CD14-positive monocyte (primary cell): ENCODE measurements at regions of chr5 and their contacts with region 1.

Region 1: DNA sequence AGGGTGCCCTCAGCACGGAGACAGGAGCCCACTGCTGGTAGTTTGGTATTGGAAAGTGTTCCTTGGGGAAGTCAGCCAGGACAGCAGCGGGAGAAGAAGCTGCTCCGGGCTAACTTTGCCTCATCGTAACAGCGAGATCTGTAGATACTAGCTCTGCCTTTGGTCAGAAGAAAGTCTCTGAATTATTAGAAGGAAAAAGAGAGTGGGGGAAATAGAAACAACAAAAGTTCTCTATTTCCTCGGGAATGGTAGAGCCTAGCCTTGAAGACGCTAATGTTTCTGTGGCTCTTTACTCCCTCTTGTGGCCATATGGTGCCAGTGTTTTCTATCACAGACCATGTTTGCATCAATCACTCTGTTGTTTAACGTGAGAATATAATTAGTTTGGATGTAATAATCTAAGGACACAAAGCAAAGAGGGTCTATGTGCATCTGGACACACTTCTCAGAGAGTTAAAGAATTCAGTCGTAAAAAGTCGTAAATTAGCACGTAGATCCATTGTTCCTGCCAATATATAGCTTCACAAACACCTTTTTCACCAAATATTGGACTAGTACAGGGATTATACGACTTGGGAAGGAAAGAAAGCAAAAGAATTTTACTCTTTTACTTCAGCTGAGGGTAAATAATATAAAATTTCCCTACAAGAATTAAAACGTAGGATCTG is 40.2 kb upstream of the HSD17B4 start:
- DNase-seq: peak; percentile 63 to 80 (median 76)
- H3K4me3 ChIP-seq: peak overlapping the region; percentile 51 to 87 (median 77)
- H3K4me3 Mint-ChIP-seq: peak overlapping the region; percentile 82 to 99
- H3K27ac ChIP-seq: peak overlapping the region in 1 of 2 donors; percentile 72
- H3K27ac Mint-ChIP-seq: peak overlapping the region; percentile 57 to 94 (median 87)
- H3K4me1 ChIP-seq: peaks cover 14 to 20% of the 10 kb centered on the region in 2 donors
- H3K4me1 Mint-ChIP-seq: peaks cover 29% of the 10 kb centered on the region
- H3K27me3 ChIP-seq: no peaks in the 10 kb centered on the region
- H3K27me3 Mint-ChIP-seq: peaks cover 0 to 2% (median 1%) of the 10 kb centered on the region in 3 donors
- CTCF ChIP-seq: peak; percentile 93

Region 2: GRCh38 chr5:118987988-118988865 is 423.8 kb before region 1 on chr5 and contains the start of gene DTWD2:
- intact Hi-C with region 1: loop called in 1 of 2 experiments (anchors 10 kb)
- DNase-seq: peak; percentile 85 to 87 (median 87)
- H3K4me3 ChIP-seq: peak within 1 kb of the TSS; percentile 56 to 87 (median 80)
- H3K4me3 Mint-ChIP-seq: peak within 1 kb of the TSS; percentile 74 to 89
- H3K27ac ChIP-seq: peak within 1 kb of the TSS; percentile 41 to 89
- H3K27ac Mint-ChIP-seq: peak within 1 kb of the TSS in 6 of 7 donors; percentile 59 to 91 (median 73)
- H3K4me1 ChIP-seq: peaks cover 11 to 17% of the 10 kb centered on the region in 2 donors
- H3K4me1 Mint-ChIP-seq: peaks cover 14% of the 10 kb centered on the region
- H3K27me3 ChIP-seq: no peaks in the 10 kb centered on the region
- H3K27me3 Mint-ChIP-seq: no peaks in the 10 kb centered on the region
- CTCF ChIP-seq: peak; percentile 99
- polyA plus RNA-seq, gene DTWD2: 1.2 to 2.7 (median 2.5) TPM

Region 3: DNA sequence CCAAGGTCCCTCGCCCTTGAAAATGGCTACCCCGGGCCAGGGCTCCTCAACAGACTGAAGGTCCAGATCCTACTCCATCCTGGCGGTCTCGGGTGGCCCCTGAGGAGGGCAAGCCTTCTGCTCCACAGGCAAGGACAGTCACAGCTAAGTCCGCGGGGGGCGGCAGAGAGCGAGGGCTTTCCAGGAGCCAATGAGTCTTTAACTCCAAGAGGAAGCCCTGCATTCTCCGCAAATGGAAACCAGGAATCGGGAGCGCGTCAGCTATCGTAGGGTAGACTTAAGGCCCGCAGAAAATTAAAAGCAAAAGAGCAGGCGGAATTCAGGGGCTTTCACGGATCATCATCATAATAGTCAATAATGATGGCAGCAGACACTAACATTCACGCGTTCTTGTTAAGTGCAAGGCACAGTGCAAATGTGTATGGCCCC is 144.1 kb before region 1 on chr5:
- intact Hi-C with region 1: loop called (anchors 5 to 10 kb)
- DNase-seq: peak; percentile 92 to 95 (median 94)
- H3K4me3 ChIP-seq: peak overlapping the region; percentile 98 to 99 (median 99)
- H3K4me3 Mint-ChIP-seq: peak overlapping the region; percentile 98 to 100
- H3K27ac ChIP-seq: peak overlapping the region; percentile 72 to 96
- H3K27ac Mint-ChIP-seq: peak overlapping the region; percentile 84 to 96 (median 92)
- H3K4me1 ChIP-seq: peaks cover 42 to 46% of the 10 kb centered on the region in 2 donors
- H3K4me1 Mint-ChIP-seq: peaks cover 47% of the 10 kb centered on the region
- H3K27me3 ChIP-seq: no peaks in the 10 kb centered on the region
- H3K27me3 Mint-ChIP-seq: peaks cover 0 to 2% (median 0%) of the 10 kb centered on the region in 3 donors
- CTCF ChIP-seq: peak; percentile 94

Region 4: GRCh38 chr5:119340597-119341218 is 71.4 kb before region 1 on chr5:
- intact Hi-C with region 1: loop called in 1 of 2 experiments (anchors 10 kb)
- DNase-seq: peak; percentile 25 to 52 (median 47)
- H3K4me3 ChIP-seq: peak overlapping the region in 2 of 3 experiments; percentile 31 to 67
- H3K4me3 Mint-ChIP-seq: peak overlapping the region; percentile 69 to 85
- H3K27ac ChIP-seq: peak overlapping the region; percentile 52 to 88
- H3K27ac Mint-ChIP-seq: peak overlapping the region; percentile 79 to 97 (median 92)
- H3K4me1 ChIP-seq: peaks cover 96 to 99% of the 10 kb centered on the region in 2 donors
- H3K4me1 Mint-ChIP-seq: peaks cover 95% of the 10 kb centered on the region
- H3K27me3 ChIP-seq: no peaks in the 10 kb centered on the region
- H3K27me3 Mint-ChIP-seq: no peaks in the 10 kb centered on the region
- CTCF ChIP-seq: no peak

Region 5: GRCh38 chr5:119355685-119356611 is 56.1 kb before region 1 on chr5 and contains the start of gene TNFAIP8:
- intact Hi-C with region 1: loop called in 1 of 2 experiments (anchors 5 kb)
- DNase-seq: peak; percentile 62 to 89 (median 68)
- H3K4me3 ChIP-seq: peak within 1 kb of the TSS; percentile 90 to 98 (median 90)
- H3K4me3 Mint-ChIP-seq: peak within 1 kb of the TSS; percentile 99 to 100
- H3K27ac ChIP-seq: peak within 1 kb of the TSS; percentile 92 to 96
- H3K27ac Mint-ChIP-seq: peak within 1 kb of the TSS; percentile 94 to 99 (median 97)
- H3K4me1 ChIP-seq: peaks cover 63 to 68% of the 10 kb centered on the region in 2 donors
- H3K4me1 Mint-ChIP-seq: peaks cover 79% of the 10 kb centered on the region
- H3K27me3 ChIP-seq: no peaks in the 10 kb centered on the region
- H3K27me3 Mint-ChIP-seq: peaks cover 0 to 2% (median 0%) of the 10 kb centered on the region in 3 donors
- CTCF ChIP-seq: no peak
- polyA plus RNA-seq, gene TNFAIP8: 20.6 to 55.5 (median 47.0) TPM

Region 6: DNA sequence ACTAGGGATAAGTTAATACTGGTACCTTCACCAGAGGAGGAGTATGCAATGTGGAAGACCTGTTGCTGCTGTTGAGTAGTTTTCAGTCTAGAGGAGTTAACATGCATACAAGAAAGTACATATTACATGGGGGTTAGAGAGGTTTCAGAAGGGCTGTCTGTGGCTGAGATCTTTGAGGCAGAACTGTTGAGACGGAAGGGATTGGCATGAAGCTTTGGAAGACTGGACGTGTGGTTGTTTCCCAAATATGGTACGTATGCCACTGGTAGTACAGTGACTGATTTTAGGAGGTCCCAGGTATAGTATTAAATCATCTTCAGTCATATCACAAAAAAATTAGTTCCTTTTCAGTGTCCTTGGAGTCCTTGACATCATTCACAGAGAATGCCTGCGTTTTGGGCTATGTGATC is 38.6 kb before region 1 on chr5:
- intact Hi-C with region 1: no loop called
- DNase-seq: no peak
- H3K4me3 ChIP-seq: no peak overlapping the region
- H3K4me3 Mint-ChIP-seq: no peak overlapping the region
- H3K27ac ChIP-seq: peak overlapping the region in 1 of 2 donors; percentile 21
- H3K27ac Mint-ChIP-seq: peak overlapping the region in 2 of 7 donors; percentile 1 to 48
- H3K4me1 ChIP-seq: peaks cover 3 to 12% of the 10 kb centered on the region in 2 donors
- H3K4me1 Mint-ChIP-seq: peaks cover 31% of the 10 kb centered on the region
- H3K27me3 ChIP-seq: no peaks in the 10 kb centered on the region
- H3K27me3 Mint-ChIP-seq: no peaks in the 10 kb centered on the region
- CTCF ChIP-seq: no peak

Region 7: GRCh38 chr5:119435436-119436132 is 23.5 kb after region 1 on chr5:
- intact Hi-C with region 1: no loop called
- DNase-seq: peak; percentile 69 to 80 (median 76)
- H3K4me3 ChIP-seq: no peak overlapping the region
- H3K4me3 Mint-ChIP-seq: peak overlapping the region in 1 of 2 donors; percentile 35
- H3K27ac ChIP-seq: no peak overlapping the region
- H3K27ac Mint-ChIP-seq: peak overlapping the region in 6 of 7 donors; percentile 25 to 74 (median 37)
- H3K4me1 ChIP-seq: peaks cover 24 to 30% of the 10 kb centered on the region in 2 donors
- H3K4me1 Mint-ChIP-seq: peaks cover 42% of the 10 kb centered on the region
- H3K27me3 ChIP-seq: no peaks in the 10 kb centered on the region
- H3K27me3 Mint-ChIP-seq: peaks cover 0 to 5% (median 0%) of the 10 kb centered on the region in 3 donors
- CTCF ChIP-seq: peak; percentile 85